Activated CD4-positive, alpha-beta T cell treated with anti-CD3 and anti-CD28 coated beads for 36 hours (primary cell): ENCODE measurements at regions of chr18 and their contacts with region 1.

Region 1: GRCh38 chr18:864872-865273 is 39.8 kb upstream of the ADCYAP1 start:
- DNase-seq: peak; percentile 83
- ATAC-seq: peak; percentile 83
- H3K4me3 Mint-ChIP-seq: no peak overlapping the region
- H3K27ac Mint-ChIP-seq: no peak overlapping the region
- H3K4me1 Mint-ChIP-seq: peaks cover 5% of the 10 kb centered on the region
- H3K27me3 Mint-ChIP-seq: peaks cover 20% of the 10 kb centered on the region

Region 2: DNA sequence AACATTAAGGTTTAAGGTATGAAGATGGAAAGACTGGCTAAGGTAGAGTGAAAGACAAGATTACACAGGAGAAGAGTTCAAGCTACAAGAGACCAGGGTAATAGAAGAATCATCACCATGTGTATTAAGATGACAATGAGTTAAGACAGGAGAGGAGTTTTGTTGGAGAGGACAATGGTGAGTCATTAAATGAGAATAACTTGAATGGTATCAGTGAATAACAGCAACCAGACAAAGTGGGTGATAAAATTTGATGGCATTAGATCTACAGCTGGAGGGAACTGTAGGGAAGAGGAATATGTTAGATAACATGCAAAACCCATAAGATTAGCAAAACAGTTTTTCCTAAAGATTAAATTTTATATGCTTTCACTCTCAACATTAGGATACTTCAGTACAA is 133.7 kb before region 1 on chr18:
- CTCF ChIA-PET with region 1: no interaction called
- POLR2A ChIA-PET with region 1: no interaction called
- intact Hi-C with region 1: no loop called
- DNase-seq: no peak
- ATAC-seq: no peak
- H3K4me3 Mint-ChIP-seq: no peak overlapping the region
- H3K27ac Mint-ChIP-seq: no peak overlapping the region
- H3K4me1 Mint-ChIP-seq: peaks cover 3% of the 10 kb centered on the region
- H3K27me3 Mint-ChIP-seq: no peaks in the 10 kb centered on the region

Region 3: GRCh38 chr18:903701-904100 is 38.8 kb after region 1 on chr18:
- CTCF ChIA-PET with region 1: interaction called, 4 read pairs
- POLR2A ChIA-PET with region 1: no interaction called
- intact Hi-C with region 1: loop called in 1 of 2 experiments (anchors 5 kb)
- DNase-seq: peak; percentile 79
- ATAC-seq: no peak
- H3K4me3 Mint-ChIP-seq: no peak overlapping the region
- H3K27ac Mint-ChIP-seq: no peak overlapping the region
- H3K4me1 Mint-ChIP-seq: peaks cover 18% of the 10 kb centered on the region
- H3K27me3 Mint-ChIP-seq: peaks cover 60% of the 10 kb centered on the region

Region 4: DNA sequence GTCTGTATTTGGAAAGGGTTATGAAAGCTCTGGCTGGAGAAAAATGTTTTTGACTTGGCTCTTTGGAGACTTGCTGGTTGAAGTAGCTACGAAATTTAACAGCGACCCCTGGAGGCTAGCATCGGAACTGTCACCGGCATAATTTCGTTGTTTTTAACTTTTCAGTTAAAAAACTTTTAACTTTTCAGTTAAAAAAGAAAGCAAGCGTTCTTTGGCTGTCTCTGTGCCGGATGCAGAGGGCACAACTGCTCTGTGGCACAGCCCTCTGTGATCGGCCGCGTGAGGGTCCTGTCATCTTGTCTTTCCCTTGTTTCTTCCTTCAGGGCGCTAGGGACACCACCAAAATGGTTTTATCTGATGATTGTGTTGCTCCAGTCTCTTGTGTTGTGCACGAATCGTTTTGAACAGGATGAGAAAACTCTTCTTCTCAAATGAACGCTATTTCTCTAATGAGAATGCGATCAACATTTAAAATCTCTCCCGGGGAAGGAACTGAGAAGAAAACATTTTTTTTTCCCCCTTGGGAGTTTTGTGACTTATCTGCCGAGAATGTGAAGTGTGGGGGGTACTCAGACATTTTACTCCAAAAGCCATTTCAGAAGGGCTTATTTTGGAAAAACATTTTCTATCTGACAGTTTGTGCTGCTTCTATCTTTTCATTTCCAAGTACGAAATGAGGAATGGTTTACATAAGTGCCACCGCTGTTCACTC is 96.9 kb after region 1 on chr18:
- CTCF ChIA-PET with region 1: interaction called, 20 read pairs
- POLR2A ChIA-PET with region 1: no interaction called
- intact Hi-C with region 1: loop called (anchors 1 to 2 kb)
- DNase-seq: peak; percentile 70
- ATAC-seq: no peak
- H3K4me3 Mint-ChIP-seq: no peak overlapping the region
- H3K27ac Mint-ChIP-seq: no peak overlapping the region
- H3K4me1 Mint-ChIP-seq: peaks cover 4% of the 10 kb centered on the region
- H3K27me3 Mint-ChIP-seq: peaks cover 9% of the 10 kb centered on the region

Region 5: DNA sequence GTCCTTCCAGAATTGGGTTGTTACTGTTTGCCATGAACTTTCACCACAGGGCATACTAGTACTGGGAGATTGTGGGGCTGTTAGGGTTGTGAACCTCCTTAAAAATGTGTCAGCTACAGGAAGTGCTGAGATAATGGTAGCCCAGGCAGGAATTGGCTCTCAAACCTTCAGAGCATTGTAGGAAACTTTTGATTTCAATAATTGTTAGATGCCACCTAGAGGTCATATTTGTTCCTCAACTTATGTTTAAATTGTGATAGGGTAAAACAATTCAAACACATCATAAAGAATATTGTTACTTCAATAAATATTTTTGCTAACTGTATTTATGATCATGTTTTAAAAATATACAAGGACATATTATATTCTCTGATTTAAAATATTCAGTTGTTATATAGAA is 634.4 kb after region 1 on chr18:
- CTCF ChIA-PET with region 1: no interaction called
- POLR2A ChIA-PET with region 1: no interaction called
- intact Hi-C with region 1: loop called in 1 of 2 experiments (anchors 5 kb)
- DNase-seq: no peak
- ATAC-seq: no peak
- H3K4me3 Mint-ChIP-seq: no peak overlapping the region
- H3K27ac Mint-ChIP-seq: no peak overlapping the region
- H3K4me1 Mint-ChIP-seq: no peaks in the 10 kb centered on the region
- H3K27me3 Mint-ChIP-seq: no peaks in the 10 kb centered on the region

Region 6: GRCh38 chr18:1663879-1664705 is 799.2 kb after region 1 on chr18:
- CTCF ChIA-PET with region 1: no interaction called
- POLR2A ChIA-PET with region 1: no interaction called
- intact Hi-C with region 1: loop called in 1 of 2 experiments (anchors 2 kb)
- DNase-seq: peak; percentile 68
- ATAC-seq: peak; percentile 42
- H3K4me3 Mint-ChIP-seq: no peak overlapping the region
- H3K27ac Mint-ChIP-seq: no peak overlapping the region
- H3K4me1 Mint-ChIP-seq: no peaks in the 10 kb centered on the region
- H3K27me3 Mint-ChIP-seq: peaks cover 5% of the 10 kb centered on the region

Region 7: DNA sequence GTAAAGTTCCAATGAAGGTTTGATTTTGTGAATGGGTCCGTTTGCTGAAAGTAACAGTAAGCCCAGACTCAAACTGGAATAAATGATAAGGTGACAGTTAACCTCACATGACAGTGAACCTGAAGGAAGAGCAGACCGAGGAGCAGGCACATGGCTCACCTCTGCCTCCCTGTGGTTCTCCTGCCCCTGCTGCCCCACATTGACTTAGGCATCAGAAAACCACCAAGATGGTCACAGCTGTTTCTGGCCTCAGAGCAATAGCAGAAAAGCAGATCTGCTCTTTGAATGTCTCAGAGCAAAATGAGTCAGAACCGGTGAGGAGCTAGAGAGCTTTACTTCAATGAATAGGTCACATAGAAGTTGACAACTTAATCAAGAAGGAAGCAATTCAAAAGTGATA is 1218.8 kb after region 1 on chr18:
- CTCF ChIA-PET with region 1: no interaction called
- POLR2A ChIA-PET with region 1: no interaction called
- intact Hi-C with region 1: loop called in 1 of 2 experiments (anchors 10 kb)
- DNase-seq: peak; percentile 46
- ATAC-seq: peak; percentile 53
- H3K4me3 Mint-ChIP-seq: no peak overlapping the region
- H3K27ac Mint-ChIP-seq: no peak overlapping the region
- H3K4me1 Mint-ChIP-seq: no peaks in the 10 kb centered on the region
- H3K27me3 Mint-ChIP-seq: no peaks in the 10 kb centered on the region

Region 8: DNA sequence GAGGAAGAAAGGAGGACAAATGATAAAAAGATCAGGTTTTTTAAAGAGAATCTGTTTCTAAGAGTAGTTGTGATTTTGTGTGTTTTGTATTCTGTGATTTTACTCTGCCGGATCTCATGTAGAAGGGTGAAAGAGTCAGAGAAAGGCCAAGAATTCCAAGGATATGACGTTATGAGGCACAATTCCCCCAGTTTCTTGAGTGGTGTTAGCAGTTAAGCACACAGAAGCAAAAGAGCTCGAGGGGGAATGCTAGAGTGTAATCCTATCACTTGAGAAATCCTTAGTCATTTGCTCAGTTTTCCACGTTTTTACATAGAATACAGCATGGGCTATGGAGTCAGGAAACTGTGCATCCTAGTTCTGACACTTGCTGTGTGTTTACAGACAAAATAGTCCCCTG is 1671.6 kb after region 1 on chr18:
- CTCF ChIA-PET with region 1: interaction called, 7 read pairs
- POLR2A ChIA-PET with region 1: no interaction called
- intact Hi-C with region 1: loop called in 1 of 2 experiments (anchors 5 kb)
- DNase-seq: no peak
- ATAC-seq: no peak
- H3K4me3 Mint-ChIP-seq: no peak overlapping the region
- H3K27ac Mint-ChIP-seq: no peak overlapping the region
- H3K4me1 Mint-ChIP-seq: no peaks in the 10 kb centered on the region
- H3K27me3 Mint-ChIP-seq: no peaks in the 10 kb centered on the region